Transverse colon (tissue), 4 donors: ENCODE measurements at regions of chr1 and their contacts with region 1.

Region 1: DNA sequence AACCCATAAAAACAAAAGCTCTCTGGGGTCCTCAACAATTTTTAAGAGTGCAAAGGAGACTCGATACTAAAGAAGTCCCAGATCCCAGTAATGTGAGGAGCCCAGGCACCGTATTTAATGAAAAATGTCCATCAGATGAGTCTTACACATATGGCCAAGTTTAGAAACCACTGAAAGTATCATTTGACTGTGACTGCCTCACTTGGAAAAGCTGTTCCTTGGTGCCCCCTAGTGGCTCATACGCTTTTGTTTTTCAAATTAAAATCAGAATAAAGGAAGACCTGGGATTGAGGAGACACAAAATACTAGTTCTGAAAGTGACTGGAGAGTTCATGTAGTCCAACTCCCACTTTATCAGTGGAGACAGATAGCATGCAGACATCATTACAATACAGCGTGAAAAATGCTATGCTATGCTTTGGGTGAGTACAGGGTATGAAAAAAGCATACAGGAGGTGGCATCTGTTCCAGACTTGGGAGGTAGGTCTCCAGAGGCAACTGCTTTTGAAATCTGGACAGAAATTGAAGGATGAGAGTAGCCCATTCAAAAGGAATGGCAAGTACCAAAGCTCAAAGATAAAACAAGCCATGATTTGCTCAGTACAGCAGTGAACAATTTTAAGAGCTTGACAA is 33.8 kb downstream of the GDAP2 start:
- DNase-seq: peak; percentile 66
- H3K4me3 ChIP-seq: no peak overlapping the region
- H3K27ac ChIP-seq: no peak overlapping the region
- H3K4me1 ChIP-seq: no peaks in the 10 kb centered on the region
- H3K27me3 ChIP-seq: no peaks in the 10 kb centered on the region
- CTCF ChIP-seq: peak; percentile 59 to 77 (median 71)
- EP300 ChIP-seq: no peak
- POLR2A ChIP-seq: no peak

Region 2: DNA sequence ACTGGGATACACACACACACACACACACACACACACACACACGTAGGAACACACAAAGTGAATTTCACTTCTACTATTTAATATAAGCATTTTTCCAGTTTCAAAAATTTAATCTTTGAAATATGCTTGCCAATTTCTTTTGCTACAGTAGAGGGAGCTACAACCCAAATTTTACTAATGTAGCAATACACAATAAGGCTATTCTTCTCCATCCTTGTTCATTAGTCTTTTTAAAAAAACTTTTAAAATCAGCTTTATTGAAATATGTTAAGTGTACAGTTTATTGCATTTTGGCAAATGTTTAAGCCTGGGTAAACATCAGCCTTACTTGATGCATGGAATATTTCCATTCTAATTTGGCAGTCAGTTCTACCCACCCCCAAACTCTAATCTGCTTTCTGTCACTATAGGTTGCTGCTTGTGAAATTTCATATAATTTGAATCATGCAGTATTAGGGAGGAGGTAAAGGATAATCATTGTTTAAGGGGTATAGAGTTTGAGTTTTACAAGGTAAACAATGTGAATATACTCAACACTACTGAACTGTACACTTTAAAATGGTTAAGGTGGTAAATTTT is 382.8 kb before region 1 on chr1:
- in situ Hi-C with region 1: loop called in 2 of 4 experiments (anchors 25 kb)
- intact Hi-C with region 1: no loop called
- DNase-seq: no peak
- H3K4me3 ChIP-seq: no peak overlapping the region
- H3K27ac ChIP-seq: no peak overlapping the region
- H3K4me1 ChIP-seq: no peaks in the 10 kb centered on the region
- H3K27me3 ChIP-seq: no peaks in the 10 kb centered on the region
- CTCF ChIP-seq: peak; percentile 48 to 67 (median 59)
- EP300 ChIP-seq: no peak
- POLR2A ChIP-seq: no peak

Region 3: GRCh38 chr1:118081401-118081800 is 185.8 kb after region 1 on chr1:
- in situ Hi-C with region 1: no loop called
- intact Hi-C with region 1: no loop called
- DNase-seq: no peak
- H3K4me3 ChIP-seq: no peak overlapping the region
- H3K27ac ChIP-seq: no peak overlapping the region
- H3K4me1 ChIP-seq: no peaks in the 10 kb centered on the region
- H3K27me3 ChIP-seq: no peaks in the 10 kb centered on the region
- CTCF ChIP-seq: no peak
- EP300 ChIP-seq: no peak
- POLR2A ChIP-seq: no peak